Stomach (tissue), 19 donors: ENCODE measurements at regions of chr5 and their contacts with region 1.

Region 1: DNA sequence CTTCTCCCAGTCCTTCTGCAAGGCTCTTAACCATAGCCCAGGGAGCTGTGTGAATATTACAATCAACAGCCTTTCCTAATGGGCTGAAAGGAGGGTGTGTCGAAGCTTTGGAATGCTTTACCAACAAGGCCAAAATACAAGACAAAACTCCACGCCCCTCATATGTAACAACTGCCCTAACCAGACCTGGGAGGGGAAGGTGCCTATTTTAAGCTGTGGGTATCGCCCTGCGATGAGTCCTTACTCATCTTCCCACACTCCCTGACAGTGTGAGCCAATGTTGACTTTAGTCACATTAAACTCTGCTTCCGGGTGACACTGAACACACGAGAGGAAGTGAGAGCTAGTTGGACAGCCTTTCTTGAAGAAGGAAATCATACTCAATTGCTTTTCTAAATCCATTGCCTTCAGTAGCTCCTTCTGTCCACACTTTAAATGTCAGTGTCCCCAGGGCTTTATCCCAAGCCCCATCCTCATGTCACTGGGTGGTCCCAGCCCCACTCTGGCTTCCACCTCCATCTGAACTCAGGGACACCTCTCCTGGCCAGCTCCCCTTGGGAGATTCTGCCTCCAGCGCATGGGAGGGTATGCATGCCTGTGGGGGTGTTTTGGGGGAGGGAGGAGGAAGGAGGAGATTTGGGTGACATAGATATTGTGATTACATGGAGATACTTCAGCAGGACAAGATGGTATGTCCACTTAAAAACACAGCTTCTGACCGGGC is 6.5 kb upstream of the TBC1D9B start:
- DNase-seq: peak in 1 of 2 donors; percentile 60
- H3K4me3 ChIP-seq: no peak overlapping the region
- H3K27ac ChIP-seq: no peak overlapping the region
- H3K4me1 ChIP-seq: peaks cover 0 to 26% (median 15%) of the 10 kb centered on the region in 4 donors
- H3K27me3 ChIP-seq: peaks cover 0 to 9% (median 0%) of the 10 kb centered on the region in 3 donors
- CTCF ChIP-seq: no peak
- EP300 ChIP-seq: no peak
- POLR2A ChIP-seq: no peak

Region 2: DNA sequence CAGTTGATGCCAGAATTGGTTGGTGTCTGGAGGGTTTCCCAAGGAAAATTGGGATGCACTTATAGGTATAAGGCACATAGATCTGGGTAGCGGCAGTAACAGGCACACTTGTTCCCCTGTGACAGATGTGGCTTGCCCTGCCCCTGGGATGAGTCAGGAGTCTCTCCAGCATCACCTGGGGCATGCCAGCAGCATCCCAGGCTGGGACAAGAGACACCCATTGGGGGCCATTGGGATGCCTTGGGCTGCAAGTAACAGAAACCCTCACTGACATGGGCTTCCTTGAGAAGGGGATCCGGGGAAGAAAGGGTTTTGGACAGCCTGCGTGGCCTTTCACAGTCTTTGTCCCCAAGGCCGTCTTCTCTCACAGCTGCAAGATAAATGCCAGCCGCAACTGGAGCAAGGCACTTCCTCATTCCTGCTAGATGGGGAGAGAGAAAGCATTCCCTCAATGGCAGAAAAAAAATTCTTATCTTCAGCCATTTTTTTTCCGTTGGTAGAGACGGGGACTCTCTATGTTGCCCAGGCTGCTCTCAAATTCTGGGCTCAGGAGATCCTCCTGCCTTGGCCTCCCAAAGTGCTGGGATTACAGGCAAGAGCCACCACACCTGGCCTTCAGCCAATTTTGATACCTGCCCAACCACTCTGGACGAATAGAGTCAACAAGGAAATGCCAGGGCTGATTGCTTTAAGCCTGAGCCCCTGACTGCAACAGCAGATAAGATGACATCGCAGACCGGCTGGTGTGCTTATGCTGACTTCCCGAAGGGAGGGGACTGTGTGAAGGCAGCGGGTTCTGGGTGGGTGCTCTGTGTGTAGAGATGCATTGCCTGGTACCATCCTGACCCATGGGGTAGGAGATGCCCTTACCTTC is 170.7 kb after region 1 on chr5:
- intact Hi-C with region 1: loop called (anchors 10 kb)
- DNase-seq: peak; percentile 83 to 91
- H3K4me3 ChIP-seq: no peak overlapping the region
- H3K27ac ChIP-seq: peak overlapping the region; percentile 12 to 55 (median 15)
- H3K4me1 ChIP-seq: peaks cover 0 to 18% (median 14%) of the 10 kb centered on the region in 4 donors
- H3K27me3 ChIP-seq: peaks cover 0 to 8% (median 0%) of the 10 kb centered on the region in 3 donors
- CTCF ChIP-seq: no peak
- EP300 ChIP-seq: no peak
- POLR2A ChIP-seq: no peak